ENCODE measurements at regions of chr14 and their contacts with region 1.

Region 1: DNA sequence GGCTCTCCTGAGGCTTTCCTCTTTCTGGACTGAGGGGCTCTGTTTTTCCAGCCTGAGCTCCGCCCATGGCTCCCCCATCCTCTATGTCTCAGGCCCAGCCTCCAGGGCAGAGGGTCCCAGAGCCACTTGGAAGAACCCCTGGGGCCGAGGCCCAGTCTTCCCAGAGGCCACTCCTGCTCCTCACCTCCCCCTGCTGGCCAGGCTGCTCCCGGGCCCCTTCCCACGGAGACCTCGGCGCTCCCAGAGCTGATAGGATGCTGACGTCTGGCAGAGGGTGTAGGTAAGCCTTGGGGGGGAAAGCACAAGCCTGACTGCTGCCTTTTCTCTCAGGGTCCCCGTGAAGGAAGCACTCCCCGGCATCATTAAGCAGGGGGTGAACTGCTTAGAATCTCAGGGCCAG is 51.4 kb downstream of the ERH start:
- DNase-seq: peak; percentile 40 to 65
- ATAC-seq: peak; percentile 73 to 94
- H3K4me3 ChIP-seq: no peak overlapping the region
- H3K27ac ChIP-seq: no peak overlapping the region
- H3K4me1 ChIP-seq: no peaks in the 10 kb centered on the region
- CTCF ChIP-seq: peak; percentile 57
- EP300 ChIP-seq: no peak
- POLR2A ChIP-seq: no peak
- RAD21 ChIP-seq: peak; percentile 53 to 60; a peak in 4 of 5 replicates

Region 2: DNA sequence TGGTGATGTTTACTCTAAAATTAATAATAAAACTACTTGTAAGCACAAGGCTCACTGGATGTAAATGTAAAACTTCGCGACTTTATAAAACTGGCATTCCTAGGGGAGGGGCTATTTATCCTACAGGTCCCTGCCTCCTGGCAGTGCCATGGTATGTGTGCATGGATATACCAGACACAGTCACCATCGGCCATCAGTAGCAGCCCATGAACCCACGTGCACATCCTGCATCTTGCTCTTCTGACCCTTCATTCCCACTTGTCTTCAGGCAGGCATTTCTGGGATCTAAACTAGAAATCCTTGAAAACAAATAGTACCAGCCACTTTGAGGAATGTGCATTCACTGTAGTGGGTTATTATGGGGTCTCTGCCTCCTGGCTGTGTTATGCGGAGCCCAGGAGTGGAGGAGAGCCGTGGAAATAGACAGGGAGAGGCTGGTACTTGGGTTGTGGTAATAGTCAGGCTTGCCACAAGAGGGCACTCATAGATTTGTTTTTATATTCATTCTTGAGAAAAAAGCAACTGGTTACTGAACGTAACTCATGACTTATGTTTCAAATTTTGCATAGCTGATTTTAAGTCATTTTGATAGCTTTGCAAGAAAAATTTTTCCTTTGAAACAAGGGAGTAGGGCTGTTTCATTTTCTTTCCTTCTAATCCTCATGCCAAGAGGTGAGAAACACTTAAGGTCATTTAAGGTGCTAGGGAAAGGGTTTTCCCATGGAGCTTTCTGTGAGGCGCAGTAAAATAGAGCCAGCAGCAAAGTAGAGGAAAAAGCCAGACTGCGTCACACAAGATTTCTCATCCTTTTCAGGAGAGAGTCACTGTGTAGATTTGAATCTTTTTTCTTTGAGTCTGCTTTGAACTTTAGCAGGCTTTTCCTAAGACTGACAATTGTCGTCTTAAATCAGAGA is 104.1 kb before region 1 on chr14:
- CTCF ChIA-PET with region 1: interaction called, 50 read pairs
- POLR2A ChIA-PET with region 1: no interaction called
- DNase-seq: peak; percentile 69 to 76
- ATAC-seq: peak; percentile 84 to 94
- H3K4me3 ChIP-seq: no peak overlapping the region
- H3K27ac ChIP-seq: no peak overlapping the region
- H3K4me1 ChIP-seq: no peaks in the 10 kb centered on the region; the same call in 2 of the 3 replicates
- CTCF ChIP-seq: peak; percentile 83
- EP300 ChIP-seq: no peak
- POLR2A ChIP-seq: no peak
- RAD21 ChIP-seq: peak; percentile 78 to 84

Region 3: DNA sequence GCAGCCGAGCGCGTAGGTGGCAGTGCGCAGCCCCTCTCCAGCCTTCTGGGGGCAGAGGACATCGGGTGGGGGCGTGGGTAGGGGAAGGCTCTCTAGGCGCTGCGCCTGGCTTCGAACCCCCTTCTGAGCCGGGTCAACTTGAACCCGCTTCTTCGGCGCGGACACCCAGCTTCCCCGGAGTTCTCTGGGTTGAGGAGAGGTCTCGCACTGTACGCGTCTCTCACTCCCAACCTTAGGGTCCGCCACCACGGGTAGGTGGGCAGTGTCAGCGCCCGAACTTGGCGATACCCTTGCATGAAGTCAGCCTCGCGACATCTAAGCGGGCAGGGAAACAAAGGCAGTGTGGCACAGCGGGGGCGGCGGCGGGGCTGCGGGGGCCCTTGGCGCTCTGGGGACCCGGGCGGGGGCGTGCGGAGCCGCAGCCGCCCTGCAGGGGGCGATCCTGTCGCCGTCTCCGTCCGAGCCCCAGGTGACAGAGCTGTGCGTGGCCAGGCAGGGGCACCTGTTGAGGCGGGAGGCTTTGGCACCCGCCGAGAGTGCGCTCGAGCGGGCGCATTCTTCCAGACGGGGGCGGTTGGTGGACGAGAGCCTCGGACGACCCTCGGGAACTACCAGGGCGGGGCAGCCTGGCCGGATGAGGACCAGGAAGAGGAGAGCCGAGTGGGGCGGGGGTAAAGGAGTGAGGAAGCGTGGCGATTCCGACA is 85.7 kb before region 1 on chr14:
- CTCF ChIA-PET with region 1: interaction called, 19 read pairs
- POLR2A ChIA-PET with region 1: no interaction called
- DNase-seq: peak; percentile 43 to 72
- ATAC-seq: peak; percentile 63 to 81
- H3K4me3 ChIP-seq: peak overlapping the region; percentile 62
- H3K27ac ChIP-seq: peak overlapping the region in 1 of 2 experiments; percentile 79; a peak in 4 of 6 replicates
- H3K4me1 ChIP-seq: peaks cover 3% of the 10 kb centered on the region; the same call in 1 of the 3 replicates
- CTCF ChIP-seq: peak; percentile 68
- EP300 ChIP-seq: no peak
- POLR2A ChIP-seq: no peak
- RAD21 ChIP-seq: peak; percentile 33 to 64; a peak in 4 of 5 replicates

Region 4: DNA sequence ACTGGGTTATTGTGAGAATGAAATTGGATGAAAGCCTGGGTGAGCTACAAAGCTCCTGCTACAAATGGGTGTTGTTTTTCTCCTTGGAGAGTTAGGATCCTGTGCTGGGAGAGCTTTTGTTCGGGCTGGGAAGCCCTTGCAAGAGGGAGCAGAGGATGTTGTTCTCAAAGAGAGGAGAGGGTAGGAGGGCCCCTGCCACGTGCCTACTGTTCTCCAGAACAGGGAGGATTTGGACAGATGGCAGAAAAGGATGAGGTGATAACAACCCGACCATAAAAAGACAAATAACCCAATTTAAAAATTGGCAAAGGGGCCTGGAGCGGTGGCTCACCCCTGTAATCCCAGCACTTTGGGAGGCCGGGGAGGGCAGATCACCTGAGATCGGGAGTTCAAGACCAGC is 17.9 kb before region 1 on chr14:
- CTCF ChIA-PET with region 1: interaction called, 28 read pairs
- POLR2A ChIA-PET with region 1: no interaction called
- DNase-seq: no peak
- ATAC-seq: no peak
- H3K4me3 ChIP-seq: no peak overlapping the region
- H3K27ac ChIP-seq: no peak overlapping the region
- H3K4me1 ChIP-seq: no peaks in the 10 kb centered on the region
- CTCF ChIP-seq: no peak
- EP300 ChIP-seq: no peak
- POLR2A ChIP-seq: no peak
- RAD21 ChIP-seq: no peak

Region 5: DNA sequence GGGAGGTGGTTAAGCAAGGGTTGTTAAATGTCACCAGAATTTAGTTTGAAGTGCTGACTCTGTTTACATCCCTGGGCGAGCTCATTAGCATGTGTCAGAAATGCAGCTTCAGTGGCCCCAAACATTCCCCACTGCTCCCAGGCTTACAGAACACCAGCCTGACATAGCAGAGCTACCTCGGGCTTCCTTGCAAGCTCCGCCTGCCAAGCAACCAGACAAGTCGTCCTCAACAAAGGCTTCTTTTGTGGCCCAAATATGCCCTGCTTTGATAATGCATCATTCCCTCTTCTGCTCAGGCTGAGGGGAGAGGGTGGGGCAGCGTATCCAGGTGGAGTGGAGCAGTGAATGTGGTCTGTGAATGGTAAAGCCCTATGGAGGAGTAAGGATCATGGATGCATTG is 23.4 kb after region 1 on chr14:
- CTCF ChIA-PET with region 1: interaction called, 14 read pairs
- POLR2A ChIA-PET with region 1: no interaction called
- DNase-seq: no peak
- ATAC-seq: no peak
- H3K4me3 ChIP-seq: no peak overlapping the region
- H3K27ac ChIP-seq: no peak overlapping the region
- H3K4me1 ChIP-seq: no peaks in the 10 kb centered on the region
- CTCF ChIP-seq: no peak
- EP300 ChIP-seq: no peak
- POLR2A ChIP-seq: no peak
- RAD21 ChIP-seq: no peak

Region 6: DNA sequence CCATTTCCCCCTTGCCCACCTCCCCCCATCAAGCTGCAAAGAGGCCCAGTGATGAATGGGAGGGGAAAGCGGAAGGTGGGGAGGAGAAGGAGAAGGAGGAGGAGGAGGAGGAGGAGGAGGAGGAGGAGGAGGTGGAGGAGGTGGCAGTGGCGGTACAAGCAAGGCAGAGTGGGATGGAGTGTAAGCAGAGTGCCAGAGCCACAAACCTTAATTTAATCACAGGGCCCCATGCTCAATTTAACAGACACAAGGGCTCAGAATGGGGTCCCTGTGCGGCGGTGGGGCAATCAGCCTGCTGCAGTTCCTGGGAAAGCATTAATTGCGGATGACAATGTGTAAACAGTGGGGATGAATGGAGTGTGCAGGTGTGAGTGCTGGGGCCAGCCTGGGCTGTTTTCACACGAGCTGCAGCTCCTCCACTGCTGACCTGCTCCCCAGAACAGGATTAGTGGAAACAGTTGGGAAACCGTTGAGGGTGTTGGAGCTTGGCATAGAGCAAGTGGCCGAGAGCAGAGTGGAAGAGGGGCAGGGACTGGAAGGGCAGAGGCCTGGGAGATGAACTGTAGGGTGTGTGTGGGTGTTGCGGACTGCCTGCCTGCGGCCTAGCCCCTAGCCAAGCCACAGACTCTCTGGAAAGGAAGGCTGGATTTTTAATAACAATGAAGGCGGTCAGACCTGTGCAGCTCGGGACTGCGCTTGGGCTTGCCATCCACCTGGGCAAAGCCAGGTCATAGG is 496.1 kb after region 1 on chr14:
- CTCF ChIA-PET with region 1: no interaction called
- POLR2A ChIA-PET with region 1: no interaction called
- DNase-seq: no peak
- ATAC-seq: no peak
- H3K4me3 ChIP-seq: no peak overlapping the region
- H3K27ac ChIP-seq: no peak overlapping the region
- H3K4me1 ChIP-seq: peaks cover 3% of the 10 kb centered on the region; the same call in 1 of the 3 replicates
- CTCF ChIP-seq: no peak
- EP300 ChIP-seq: no peak
- POLR2A ChIP-seq: no peak
- RAD21 ChIP-seq: no peak